CD8-positive, alpha-beta T cell (primary cell): ENCODE measurements at regions of chr6 and their contacts with region 1.

Region 1: GRCh38 chr6:106979427-106979884 is 4.9 kb upstream of the CD24 start:
- DNase-seq: peak; percentile 48 to 85 (median 78)
- ATAC-seq: peak; percentile 61
- H3K4me3 ChIP-seq: no peak overlapping the region
- H3K4me3 Mint-ChIP-seq: no peak overlapping the region
- H3K27ac ChIP-seq: no peak overlapping the region
- H3K27ac Mint-ChIP-seq: no peak overlapping the region
- H3K4me1 ChIP-seq: peaks cover 4% of the 10 kb centered on the region
- H3K4me1 Mint-ChIP-seq: peaks cover 8% of the 10 kb centered on the region
- H3K27me3 ChIP-seq: peaks cover 0 to 5% of the 10 kb centered on the region in 2 experiments
- H3K27me3 Mint-ChIP-seq: peaks cover 42% of the 10 kb centered on the region
- CTCF ChIP-seq: peak; percentile 87

Region 2: GRCh38 chr6:106339334-106340029 is 640.0 kb before region 1 on chr6:
- CTCF ChIA-PET with region 1: interaction called, 13 read pairs
- POLR2A ChIA-PET with region 1: interaction called, 5 read pairs
- intact Hi-C with region 1: loop called (anchors 1 kb)
- DNase-seq: peak in 7 of 9 experiments; percentile 3 to 70 (median 43)
- ATAC-seq: peak; percentile 84
- H3K4me3 ChIP-seq: no peak overlapping the region
- H3K4me3 Mint-ChIP-seq: peak overlapping the region; percentile 33
- H3K27ac ChIP-seq: no peak overlapping the region
- H3K27ac Mint-ChIP-seq: no peak overlapping the region
- H3K4me1 ChIP-seq: no peaks in the 10 kb centered on the region
- H3K4me1 Mint-ChIP-seq: peaks cover 6% of the 10 kb centered on the region
- H3K27me3 ChIP-seq: peaks cover 0 to 2% of the 10 kb centered on the region in 2 experiments
- H3K27me3 Mint-ChIP-seq: peaks cover 23% of the 10 kb centered on the region
- CTCF ChIP-seq: peak; percentile 74

Region 3: GRCh38 chr6:106568530-106568929 is 410.9 kb before region 1 on chr6:
- CTCF ChIA-PET with region 1: interaction called, 7 read pairs
- POLR2A ChIA-PET with region 1: no interaction called
- intact Hi-C with region 1: loop called (anchors 2 kb)
- DNase-seq: no peak
- ATAC-seq: no peak
- H3K4me3 ChIP-seq: no peak overlapping the region
- H3K4me3 Mint-ChIP-seq: no peak overlapping the region
- H3K27ac ChIP-seq: no peak overlapping the region
- H3K27ac Mint-ChIP-seq: no peak overlapping the region
- H3K4me1 ChIP-seq: no peaks in the 10 kb centered on the region
- H3K4me1 Mint-ChIP-seq: peaks cover 3% of the 10 kb centered on the region
- H3K27me3 ChIP-seq: no peaks in the 10 kb centered on the region
- H3K27me3 Mint-ChIP-seq: no peaks in the 10 kb centered on the region
- CTCF ChIP-seq: no peak

Region 4: DNA sequence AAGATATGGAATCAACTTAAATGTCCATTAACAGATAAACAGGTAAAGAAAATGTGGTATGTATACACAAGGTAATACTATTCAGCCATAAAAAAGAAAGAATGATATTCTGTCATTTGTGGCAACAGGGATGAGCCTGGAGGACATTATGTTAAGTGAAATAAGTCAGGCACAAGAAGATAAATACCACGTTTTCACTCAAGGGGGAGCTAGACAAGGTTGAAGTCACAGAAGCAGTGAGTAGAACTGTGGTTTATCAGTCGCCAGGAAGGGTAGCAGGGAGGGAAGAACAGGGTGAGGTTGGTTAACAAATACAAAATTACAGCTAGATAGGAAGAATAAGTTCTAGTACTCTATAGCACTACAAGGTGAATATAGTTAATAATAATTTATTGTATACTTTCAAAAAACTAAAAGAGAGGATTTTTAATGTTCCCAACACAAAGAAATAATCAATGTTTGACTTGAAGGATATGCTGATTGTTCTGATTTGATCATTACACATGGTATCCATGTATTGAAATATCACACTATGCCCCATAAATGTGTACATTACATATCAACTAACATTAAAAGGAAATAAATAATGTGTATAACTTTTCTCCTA is 371.3 kb before region 1 on chr6:
- CTCF ChIA-PET with region 1: no interaction called
- POLR2A ChIA-PET with region 1: no interaction called
- intact Hi-C with region 1: loop called (anchors 1 to 2 kb)
- DNase-seq: peak in 2 of 9 experiments; percentile 61 to 71
- ATAC-seq: peak; percentile 83
- H3K4me3 ChIP-seq: no peak overlapping the region
- H3K4me3 Mint-ChIP-seq: no peak overlapping the region
- H3K27ac ChIP-seq: no peak overlapping the region
- H3K27ac Mint-ChIP-seq: no peak overlapping the region
- H3K4me1 ChIP-seq: no peaks in the 10 kb centered on the region
- H3K4me1 Mint-ChIP-seq: peaks cover 4% of the 10 kb centered on the region
- H3K27me3 ChIP-seq: no peaks in the 10 kb centered on the region
- H3K27me3 Mint-ChIP-seq: no peaks in the 10 kb centered on the region
- CTCF ChIP-seq: peak; percentile 71

Region 5: GRCh38 chr6:106963544-106963943 is 15.9 kb before region 1 on chr6:
- CTCF ChIA-PET with region 1: interaction called, 14 read pairs
- POLR2A ChIA-PET with region 1: no interaction called
- intact Hi-C with region 1: no loop called
- DNase-seq: no peak
- ATAC-seq: no peak
- H3K4me3 ChIP-seq: no peak overlapping the region
- H3K4me3 Mint-ChIP-seq: no peak overlapping the region
- H3K27ac ChIP-seq: no peak overlapping the region
- H3K27ac Mint-ChIP-seq: no peak overlapping the region
- H3K4me1 ChIP-seq: no peaks in the 10 kb centered on the region
- H3K4me1 Mint-ChIP-seq: no peaks in the 10 kb centered on the region
- H3K27me3 ChIP-seq: no peaks in the 10 kb centered on the region
- H3K27me3 Mint-ChIP-seq: peaks cover 20% of the 10 kb centered on the region
- CTCF ChIP-seq: no peak